ENCODE measurements at regions of chr1 and their contacts with region 1.

Region 1: DNA sequence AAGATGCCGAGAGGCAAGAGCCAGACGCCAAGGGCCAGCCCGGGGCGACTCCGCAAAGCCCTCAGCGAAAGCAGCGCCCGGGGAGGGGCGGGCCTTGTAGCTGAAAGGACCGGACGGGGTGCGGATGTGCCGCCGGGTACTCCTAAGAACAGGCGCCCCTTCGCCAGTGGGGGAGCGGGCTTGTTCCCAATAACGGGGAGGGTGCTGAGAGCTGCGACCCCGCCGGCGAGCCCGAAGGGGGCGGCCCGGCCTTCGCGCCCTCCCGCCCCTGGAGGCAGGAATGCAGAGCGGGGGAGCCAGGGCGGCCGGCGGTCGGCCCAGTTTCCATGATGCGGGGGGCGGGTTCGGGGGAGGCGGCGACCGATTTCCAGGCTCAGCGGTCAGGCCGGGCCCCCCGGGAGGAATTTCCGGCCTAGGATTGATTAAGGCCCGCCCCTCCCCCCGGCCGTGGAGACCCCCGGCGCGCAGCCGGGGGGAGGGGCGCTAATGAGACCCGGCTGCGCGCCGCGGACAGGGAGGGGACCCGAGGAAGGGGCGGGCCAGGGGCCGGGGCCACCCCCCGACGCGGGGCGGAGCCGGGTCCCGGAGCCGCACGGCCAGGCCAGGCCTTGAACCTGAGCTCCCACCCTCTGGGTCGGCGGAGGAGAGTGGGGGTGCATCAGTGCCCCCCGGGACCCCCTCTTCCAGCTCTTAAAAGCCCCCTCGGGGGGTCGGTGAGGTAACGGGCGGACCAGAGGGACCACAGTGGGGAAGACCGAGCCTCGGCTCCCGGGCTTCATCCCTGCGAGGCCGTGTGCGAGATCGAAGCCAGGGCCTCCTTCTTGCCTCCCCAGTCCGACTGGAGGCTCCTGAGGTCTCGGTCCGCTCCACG is 898 bp upstream of the TMEM200B start:
- DNase-seq: peak; percentile 37 to 66 (median 38)
- H3K4me3 ChIP-seq: peak overlapping the region; percentile 43
- H3K4me3 Mint-ChIP-seq: peak overlapping the region; percentile 52 to 87 (median 72)
- H3K27ac ChIP-seq: no peak overlapping the region
- H3K27ac Mint-ChIP-seq: peak overlapping the region in 1 of 8 donors; percentile 47
- H3K4me1 ChIP-seq: peaks cover 20% of the 10 kb centered on the region
- H3K4me1 Mint-ChIP-seq: peaks cover 6 to 26% (median 14%) of the 10 kb centered on the region in 3 donors
- H3K27me3 ChIP-seq: peaks cover 8% of the 10 kb centered on the region
- H3K27me3 Mint-ChIP-seq: peaks cover 15 to 23% of the 10 kb centered on the region in 2 donors

Region 2: GRCh38 chr1:28761189-28761588 is 363.4 kb before region 1 on chr1:
- CTCF ChIA-PET with region 1: no interaction called
- POLR2A ChIA-PET with region 1: no interaction called
- DNase-seq: no peak
- H3K4me3 ChIP-seq: no peak overlapping the region
- H3K4me3 Mint-ChIP-seq: no peak overlapping the region
- H3K27ac ChIP-seq: no peak overlapping the region
- H3K27ac Mint-ChIP-seq: no peak overlapping the region
- H3K4me1 ChIP-seq: peaks cover 19% of the 10 kb centered on the region
- H3K4me1 Mint-ChIP-seq: peaks cover 31 to 47% (median 44%) of the 10 kb centered on the region in 3 donors
- H3K27me3 ChIP-seq: no peaks in the 10 kb centered on the region
- H3K27me3 Mint-ChIP-seq: no peaks in the 10 kb centered on the region

Region 3: GRCh38 chr1:29202584-29203340 is 78.2 kb after region 1 on chr1:
- CTCF ChIA-PET with region 1: interaction called, 10 read pairs
- POLR2A ChIA-PET with region 1: no interaction called
- DNase-seq: peak; percentile 69 to 90 (median 83)
- H3K4me3 ChIP-seq: no peak overlapping the region
- H3K4me3 Mint-ChIP-seq: no peak overlapping the region
- H3K27ac ChIP-seq: peak overlapping the region; percentile 35
- H3K27ac Mint-ChIP-seq: peak overlapping the region in 1 of 8 donors; percentile 60
- H3K4me1 ChIP-seq: no peaks in the 10 kb centered on the region
- H3K4me1 Mint-ChIP-seq: peaks cover 0 to 5% (median 3%) of the 10 kb centered on the region in 3 donors
- H3K27me3 ChIP-seq: no peaks in the 10 kb centered on the region
- H3K27me3 Mint-ChIP-seq: no peaks in the 10 kb centered on the region

Measured in CD8-positive, alpha-beta memory T cell (primary cell).